Activated CD4-positive, alpha-beta T cell treated with anti-CD3 and anti-CD28 coated beads, Interleukin-2, amount 10 ng/mL, durations not matched to agents 7 days and 5 days (primary cell): ENCODE measurements at regions of chr5 and their contacts with region 1.

Region 1: GRCh38 chr5:123423278-123424149 is at the start of gene CEP120:
- DNase-seq: peak; percentile 98
- H3K4me3 Mint-ChIP-seq: no peak within 1 kb of the TSS
- H3K27ac Mint-ChIP-seq: no peak within 1 kb of the TSS
- H3K4me1 Mint-ChIP-seq: peaks cover 25% of the 10 kb centered on the region
- H3K27me3 Mint-ChIP-seq: no peaks in the 10 kb centered on the region
- total RNA-seq, gene CEP120: 31.4 to 31.7 TPM

Region 2: GRCh38 chr5:123223921-123224320 is 199.6 kb before region 1 on chr5:
- CTCF ChIA-PET with region 1: no interaction called
- POLR2A ChIA-PET with region 1: no interaction called
- DNase-seq: no peak
- H3K4me3 Mint-ChIP-seq: no peak overlapping the region
- H3K27ac Mint-ChIP-seq: no peak overlapping the region
- H3K4me1 Mint-ChIP-seq: no peaks in the 10 kb centered on the region
- H3K27me3 Mint-ChIP-seq: peaks cover 2% of the 10 kb centered on the region

Region 3: DNA sequence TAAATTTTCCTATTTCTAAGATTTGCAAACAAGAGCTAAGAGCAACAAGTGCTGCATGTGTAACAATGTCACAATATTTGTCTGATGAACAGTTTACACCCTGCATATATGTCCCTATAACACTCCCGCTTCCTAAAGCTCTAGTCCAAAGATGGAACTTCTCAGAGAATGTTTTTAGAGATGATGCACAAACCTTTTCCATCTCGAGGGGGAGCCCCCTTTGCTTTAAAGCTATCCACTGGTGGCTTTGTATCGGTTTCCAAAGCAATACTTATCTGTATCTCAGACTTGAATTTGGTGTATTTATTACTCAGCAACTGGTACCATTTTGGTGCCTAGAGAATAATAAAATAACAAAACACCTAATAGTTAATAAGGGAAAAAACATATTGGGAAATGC is 11.3 kb before region 1 on chr5:
- CTCF ChIA-PET with region 1: interaction called, 17 read pairs
- POLR2A ChIA-PET with region 1: interaction called, 19 read pairs
- DNase-seq: no peak
- H3K4me3 Mint-ChIP-seq: no peak overlapping the region
- H3K27ac Mint-ChIP-seq: no peak overlapping the region
- H3K4me1 Mint-ChIP-seq: peaks cover 2% of the 10 kb centered on the region
- H3K27me3 Mint-ChIP-seq: no peaks in the 10 kb centered on the region

Region 4: DNA sequence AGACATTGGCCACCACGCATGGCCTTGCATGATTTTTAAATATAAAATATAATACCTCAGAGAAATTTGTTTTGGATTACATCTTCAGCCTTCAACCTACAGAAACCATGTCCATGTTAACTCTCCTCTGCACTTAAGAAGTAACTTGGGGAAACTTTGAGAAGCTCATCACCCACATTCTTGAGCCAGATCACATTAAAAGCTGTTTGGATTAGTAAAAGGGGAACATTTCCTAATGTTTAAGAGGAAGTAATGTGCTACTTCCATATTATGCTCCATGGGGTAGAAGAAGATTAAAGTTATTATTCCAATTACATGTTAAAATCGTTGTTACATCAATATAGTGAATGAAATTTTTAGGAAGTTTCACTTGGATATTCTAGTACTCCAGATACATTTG is 10.1 kb after region 1 on chr5:
- CTCF ChIA-PET with region 1: interaction called, 21 read pairs
- POLR2A ChIA-PET with region 1: interaction called, 8 read pairs
- DNase-seq: no peak
- H3K4me3 Mint-ChIP-seq: no peak overlapping the region
- H3K27ac Mint-ChIP-seq: no peak overlapping the region
- H3K4me1 Mint-ChIP-seq: peaks cover 4% of the 10 kb centered on the region
- H3K27me3 Mint-ChIP-seq: no peaks in the 10 kb centered on the region

Region 5: DNA sequence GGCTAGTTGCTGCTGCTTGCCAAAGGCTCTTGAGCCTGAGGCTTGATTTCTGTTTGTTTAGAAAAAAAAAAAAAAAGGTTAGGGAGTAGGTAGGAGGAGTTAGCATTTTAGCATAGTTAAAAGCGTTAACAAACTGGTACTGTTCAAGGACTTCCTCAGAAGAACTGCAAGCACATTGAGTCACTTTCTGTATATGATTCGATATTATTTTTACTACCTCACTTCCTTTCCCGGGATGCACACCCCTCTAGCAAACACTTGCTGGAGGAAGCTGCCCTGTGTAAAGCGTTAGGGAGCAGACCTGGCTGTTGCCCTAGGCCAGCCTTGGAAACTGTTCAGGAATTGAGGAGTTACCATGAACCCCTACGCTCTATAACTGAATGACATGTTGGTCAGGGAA is 15.4 kb after region 1 on chr5:
- CTCF ChIA-PET with region 1: interaction called, 21 read pairs
- POLR2A ChIA-PET with region 1: interaction called, 8 read pairs
- DNase-seq: peak; percentile 24
- H3K4me3 Mint-ChIP-seq: no peak overlapping the region
- H3K27ac Mint-ChIP-seq: no peak overlapping the region
- H3K4me1 Mint-ChIP-seq: peaks cover 24% of the 10 kb centered on the region
- H3K27me3 Mint-ChIP-seq: no peaks in the 10 kb centered on the region

Region 6: DNA sequence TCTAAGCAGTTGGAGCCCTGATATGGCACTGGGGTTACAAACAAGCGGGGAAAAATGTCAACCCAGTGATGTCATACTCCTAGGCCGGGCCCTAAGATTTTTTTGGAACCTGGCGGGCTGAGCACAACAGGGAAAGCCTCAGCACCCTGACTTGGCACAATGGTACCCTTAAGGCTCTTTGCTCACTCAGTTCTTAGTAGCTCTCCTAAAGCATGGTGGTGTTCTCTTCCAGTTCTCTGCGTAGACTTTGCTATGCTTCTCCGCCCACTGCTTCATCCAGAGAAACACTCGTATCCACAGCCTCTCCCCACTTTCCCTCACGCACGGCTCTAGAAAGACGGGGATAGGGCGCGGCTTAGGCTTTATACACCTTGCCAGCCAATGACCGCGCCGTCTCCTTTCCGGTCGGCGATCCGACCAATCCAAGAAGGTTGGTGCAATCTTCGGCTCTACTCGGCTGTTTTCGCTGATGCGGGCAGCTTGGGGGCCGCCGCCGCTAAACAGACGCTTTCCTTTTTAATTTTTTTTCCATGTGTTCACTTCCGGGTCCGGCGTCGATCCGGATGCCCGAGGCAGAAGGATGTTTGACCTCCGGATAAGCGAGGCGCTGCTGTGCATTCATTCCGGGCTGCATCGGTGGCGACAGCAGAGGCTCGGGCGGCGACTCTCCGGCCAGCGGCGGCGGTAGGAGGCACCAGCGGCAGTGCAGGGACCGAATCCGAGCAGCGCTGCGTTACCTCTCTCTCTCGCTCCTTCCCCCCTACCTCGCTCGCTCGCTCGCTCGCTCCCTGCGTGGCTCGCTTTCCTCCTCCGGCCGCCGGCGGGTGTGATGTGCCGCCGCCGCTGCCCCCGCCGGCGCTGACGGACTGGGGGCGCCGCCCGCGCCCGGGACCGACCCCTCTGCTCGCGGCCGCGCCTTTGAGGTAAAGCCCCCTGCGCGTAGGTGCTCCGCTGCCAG is 88.4 kb after region 1 on chr5 and contains the start of gene CSNK1G3:
- CTCF ChIA-PET with region 1: interaction called, 11 read pairs
- POLR2A ChIA-PET with region 1: interaction called, 8 read pairs
- DNase-seq: peak; percentile 95
- H3K4me3 Mint-ChIP-seq: peak within 1 kb of the TSS; percentile 95
- H3K27ac Mint-ChIP-seq: peak within 1 kb of the TSS; percentile 98
- H3K4me1 Mint-ChIP-seq: peaks cover 49% of the 10 kb centered on the region
- H3K27me3 Mint-ChIP-seq: peaks cover 14% of the 10 kb centered on the region
- total RNA-seq, gene CSNK1G3: 30.8 to 33.9 TPM

Region 7: DNA sequence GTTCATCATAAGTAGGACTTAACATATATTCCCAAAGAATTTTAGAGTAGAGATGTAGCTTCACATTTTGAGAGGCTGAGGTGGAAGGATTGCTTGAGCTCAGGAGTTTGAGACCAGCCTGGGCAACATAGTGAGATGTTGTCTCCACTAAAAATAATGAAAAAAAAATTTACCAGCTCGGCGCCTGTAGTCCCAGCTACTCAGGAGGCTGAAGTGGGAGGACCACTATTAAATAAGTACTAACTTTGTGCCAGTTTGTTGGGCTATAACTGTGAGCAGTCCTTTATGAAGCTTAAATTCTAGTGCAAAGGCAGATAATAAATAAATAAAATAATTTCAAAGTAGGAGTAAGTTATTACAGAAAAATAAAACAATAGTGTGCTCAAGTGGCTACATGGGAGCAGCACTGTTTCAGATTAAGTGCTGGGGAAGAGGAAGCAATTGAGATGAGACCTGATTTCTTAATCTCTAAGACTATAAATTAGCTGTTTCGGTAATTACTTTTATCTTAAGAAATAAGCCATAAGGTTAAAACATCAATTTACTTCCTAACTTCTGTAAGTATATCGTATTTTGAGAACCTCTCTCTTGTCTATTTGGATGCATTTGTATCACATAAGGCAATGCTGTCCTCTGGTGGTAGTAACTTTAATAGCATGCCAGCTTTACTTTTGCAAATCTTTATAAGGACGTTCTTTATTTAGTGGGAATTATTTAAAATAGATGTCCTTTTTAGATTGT is 187.3 kb after region 1 on chr5:
- CTCF ChIA-PET with region 1: interaction called, 15 read pairs
- POLR2A ChIA-PET with region 1: no interaction called
- DNase-seq: peak; percentile 50
- H3K4me3 Mint-ChIP-seq: no peak overlapping the region
- H3K27ac Mint-ChIP-seq: no peak overlapping the region
- H3K4me1 Mint-ChIP-seq: peaks cover 6% of the 10 kb centered on the region
- H3K27me3 Mint-ChIP-seq: no peaks in the 10 kb centered on the region